GM12878 (cell line): ENCODE measurements at regions of chr18 and their contacts with region 1.

Region 1: DNA sequence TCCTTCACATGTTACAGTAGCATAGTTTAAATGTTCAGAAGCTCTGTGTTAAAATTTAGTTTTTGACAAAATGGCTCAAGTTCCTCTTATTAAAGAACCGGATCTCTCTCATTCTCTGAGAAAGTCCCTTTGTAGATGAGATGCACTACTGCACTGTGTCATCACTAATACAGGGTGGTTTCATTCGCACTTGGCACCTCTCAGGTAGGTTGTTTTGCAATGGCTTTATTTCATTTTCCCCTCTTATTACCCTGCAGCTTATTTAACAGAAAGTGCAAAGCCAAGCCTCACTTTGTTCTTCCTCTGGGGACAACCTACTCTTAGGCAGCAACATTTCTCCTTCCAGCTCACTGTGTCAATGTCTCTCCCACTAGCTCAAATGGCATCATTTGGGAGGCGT is 185.1 kb downstream of the DLGAP1 start:
- DNase-seq: peak; percentile 60
- ATAC-seq: peak; percentile 87
- H3K4me3 ChIP-seq: no peak overlapping the region
- H3K27ac ChIP-seq: no peak overlapping the region
- H3K4me1 ChIP-seq: no peaks in the 10 kb centered on the region
- H3K27me3 ChIP-seq: no peaks in the 10 kb centered on the region
- CTCF ChIP-seq: no peak
- EP300 ChIP-seq: peak in 1 of 2 experiments; percentile 54; a peak in 2 of 4 replicates
- POLR2A ChIP-seq: no peak
- RAD21 ChIP-seq: no peak

Region 2: GRCh38 chr18:4251873-4252272 is 18.1 kb before region 1 on chr18:
- CTCF ChIA-PET with region 1: interaction called, 12 read pairs
- POLR2A ChIA-PET with region 1: interaction called, 18 read pairs
- RAD21 ChIA-PET with region 1: interaction called, 101 read pairs
- SMC1A ChIA-PET with region 1: interaction called, 318 read pairs
- in situ Hi-C with region 1: no loop called
- intact Hi-C with region 1: no loop called
- DNase-seq: no peak
- ATAC-seq: peak; percentile 75
- H3K4me3 ChIP-seq: no peak overlapping the region
- H3K27ac ChIP-seq: no peak overlapping the region
- H3K4me1 ChIP-seq: no peaks in the 10 kb centered on the region; the same call in 1 of the 2 replicates
- H3K27me3 ChIP-seq: no peaks in the 10 kb centered on the region
- CTCF ChIP-seq: no peak
- EP300 ChIP-seq: peak; percentile 33 to 40; a peak in 2 of 4 replicates
- POLR2A ChIP-seq: no peak
- RAD21 ChIP-seq: no peak

Region 3: DNA sequence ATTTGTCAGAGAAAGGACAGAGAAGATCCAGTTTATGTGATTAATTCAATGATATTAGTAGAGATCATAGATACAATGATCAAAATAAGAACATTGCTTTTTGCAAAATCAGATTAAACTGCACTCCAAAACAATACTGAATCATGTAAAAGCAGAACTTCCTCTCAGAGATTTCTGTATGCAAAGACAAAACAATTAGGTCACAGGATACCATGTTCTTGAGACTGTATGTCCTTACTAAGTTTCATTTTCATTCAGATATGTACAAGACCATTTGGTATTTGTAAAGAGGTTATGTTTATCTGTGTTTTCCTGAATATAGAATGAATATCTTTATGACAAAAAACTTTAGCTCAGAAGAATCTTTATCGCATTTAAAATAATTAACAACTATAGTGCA is 23.3 kb after region 1 on chr18:
- CTCF ChIA-PET with region 1: interaction called, 6 read pairs
- POLR2A ChIA-PET with region 1: interaction called, 9 read pairs
- RAD21 ChIA-PET with region 1: interaction called, 25 read pairs
- SMC1A ChIA-PET with region 1: interaction called, 49 read pairs
- in situ Hi-C with region 1: no loop called
- intact Hi-C with region 1: no loop called
- DNase-seq: no peak
- ATAC-seq: peak; percentile 88
- H3K4me3 ChIP-seq: no peak overlapping the region
- H3K27ac ChIP-seq: no peak overlapping the region
- H3K4me1 ChIP-seq: no peaks in the 10 kb centered on the region
- H3K27me3 ChIP-seq: no peaks in the 10 kb centered on the region
- CTCF ChIP-seq: no peak
- EP300 ChIP-seq: 0 out of 4 replicates have a peak, but pooled peaks of 1 of the 2 experiments have one; percentile 9
- POLR2A ChIP-seq: no peak
- RAD21 ChIP-seq: no peak

Region 4: GRCh38 chr18:4352746-4353551 is 82.9 kb after region 1 on chr18:
- CTCF ChIA-PET with region 1: interaction called, 4 read pairs
- POLR2A ChIA-PET with region 1: interaction called, 3 read pairs
- RAD21 ChIA-PET with region 1: interaction called, 21 read pairs
- SMC1A ChIA-PET with region 1: interaction called, 11 read pairs
- in situ Hi-C with region 1: no loop called
- intact Hi-C with region 1: no loop called
- DNase-seq: no peak
- ATAC-seq: peak; percentile 8
- H3K4me3 ChIP-seq: no peak overlapping the region
- H3K27ac ChIP-seq: no peak overlapping the region
- H3K4me1 ChIP-seq: no peaks in the 10 kb centered on the region
- H3K27me3 ChIP-seq: no peaks in the 10 kb centered on the region
- CTCF ChIP-seq: no peak
- EP300 ChIP-seq: no peak
- POLR2A ChIP-seq: no peak
- RAD21 ChIP-seq: no peak

Region 5: DNA sequence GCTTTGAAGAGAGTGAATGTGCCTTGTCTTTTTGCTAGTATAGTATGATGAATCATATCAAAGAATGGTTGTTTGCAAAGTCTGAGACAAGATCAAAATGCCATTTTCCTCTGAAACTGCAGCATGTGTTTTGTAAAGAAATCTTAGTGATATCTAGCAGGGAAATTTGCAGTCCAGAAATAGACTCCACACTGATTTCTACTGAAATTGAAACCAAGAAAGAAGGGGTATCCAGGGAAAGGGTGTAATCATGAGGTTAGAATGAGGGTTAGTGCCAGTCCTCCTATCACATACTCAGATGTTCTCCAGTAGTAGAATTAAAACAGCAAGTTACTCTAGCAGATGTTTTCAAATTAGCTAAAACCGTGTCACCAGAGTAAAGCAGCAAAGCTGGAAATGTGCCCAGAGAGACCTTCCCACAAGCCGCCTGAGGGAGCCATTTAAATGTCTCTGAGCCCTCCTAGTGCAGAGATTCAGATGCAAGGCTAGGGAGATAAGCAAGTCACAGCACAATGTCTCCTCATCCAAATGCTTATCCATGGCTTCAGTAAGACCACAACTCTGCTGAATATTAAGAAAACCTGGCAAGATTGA is 180.1 kb after region 1 on chr18:
- CTCF ChIA-PET with region 1: no interaction called
- POLR2A ChIA-PET with region 1: interaction called, 4 read pairs
- RAD21 ChIA-PET with region 1: interaction called, 12 read pairs
- SMC1A ChIA-PET with region 1: interaction called, 30 read pairs
- in situ Hi-C with region 1: no loop called
- intact Hi-C with region 1: loop called (anchors 5 kb)
- DNase-seq: no peak
- ATAC-seq: peak; percentile 13
- H3K4me3 ChIP-seq: no peak overlapping the region
- H3K27ac ChIP-seq: no peak overlapping the region
- H3K4me1 ChIP-seq: no peaks in the 10 kb centered on the region
- H3K27me3 ChIP-seq: no peaks in the 10 kb centered on the region
- CTCF ChIP-seq: peak in 2 of 3 experiments; percentile 4 to 43; a peak in 2 of 6 replicates
- EP300 ChIP-seq: no peak
- POLR2A ChIP-seq: no peak
- RAD21 ChIP-seq: no peak